AG04449 (cell line): ENCODE measurements at regions of chr12 and their contacts with region 1.

Region 1: GRCh38 chr12:121334513-121335343 is 17.5 kb downstream of the ANAPC5 start:
- DNase-seq: peak; percentile 36
- H3K4me3 ChIP-seq: no peak overlapping the region
- CTCF ChIP-seq: peak; percentile 73

Region 2: GRCh38 chr12:121304306-121304705 is 30.4 kb before region 1 on chr12:
- CTCF ChIA-PET with region 1: interaction called, 22 read pairs
- POLR2A ChIA-PET with region 1: no interaction called
- DNase-seq: no peak
- H3K4me3 ChIP-seq: no peak overlapping the region
- CTCF ChIP-seq: no peak

Region 3: DNA sequence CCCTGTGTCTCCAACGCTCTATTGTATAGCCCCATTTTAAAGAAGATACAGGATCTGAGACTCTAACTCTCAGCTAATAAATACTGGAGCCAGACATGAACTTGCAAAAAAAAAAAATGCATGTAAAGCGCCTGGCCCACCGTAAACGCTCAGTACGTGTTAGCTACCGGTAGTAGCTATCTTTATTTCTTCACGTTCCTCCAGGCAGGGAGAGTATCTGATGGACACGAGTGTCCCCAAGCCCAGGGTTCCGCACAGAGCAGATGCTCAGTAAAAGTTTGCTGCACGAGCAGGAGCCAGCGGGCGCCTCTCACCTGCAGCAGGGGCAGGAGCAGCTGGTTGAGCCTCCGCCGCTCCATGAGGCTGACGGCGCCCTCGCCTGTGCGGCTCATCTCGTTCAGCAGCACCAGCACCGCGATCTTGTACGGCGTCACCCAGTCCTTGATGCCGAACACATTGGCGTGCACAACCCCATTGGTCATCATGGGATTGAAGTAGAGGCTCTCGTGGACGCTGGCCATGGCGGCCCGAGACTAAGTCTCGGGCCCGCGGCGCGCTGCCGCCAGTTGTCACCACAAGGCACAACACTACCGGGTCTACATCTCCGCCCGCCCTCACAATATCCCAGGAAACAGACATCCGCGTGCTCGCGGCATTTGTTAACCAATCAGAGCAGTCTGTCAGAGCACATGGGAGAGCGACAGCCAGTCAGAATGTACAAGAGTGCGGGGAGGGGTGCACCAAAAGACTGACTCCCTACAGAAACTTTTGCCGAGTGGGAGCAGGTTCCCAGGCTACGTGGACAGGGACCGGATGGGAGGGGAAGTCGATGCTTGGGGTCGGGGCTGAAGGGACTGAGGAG is 17.3 kb after region 1 on chr12 and contains the start of gene ANAPC5:
- CTCF ChIA-PET with region 1: interaction called, 117 read pairs
- POLR2A ChIA-PET with region 1: no interaction called
- DNase-seq: peak; percentile 96
- H3K4me3 ChIP-seq: peak within 1 kb of the TSS; percentile 98
- CTCF ChIP-seq: no peak

Region 4: GRCh38 chr12:121404734-121405133 is 70.0 kb after region 1 on chr12:
- CTCF ChIA-PET with region 1: interaction called, 30 read pairs
- POLR2A ChIA-PET with region 1: no interaction called
- DNase-seq: no peak
- H3K4me3 ChIP-seq: no peak overlapping the region
- CTCF ChIP-seq: no peak

Region 5: DNA sequence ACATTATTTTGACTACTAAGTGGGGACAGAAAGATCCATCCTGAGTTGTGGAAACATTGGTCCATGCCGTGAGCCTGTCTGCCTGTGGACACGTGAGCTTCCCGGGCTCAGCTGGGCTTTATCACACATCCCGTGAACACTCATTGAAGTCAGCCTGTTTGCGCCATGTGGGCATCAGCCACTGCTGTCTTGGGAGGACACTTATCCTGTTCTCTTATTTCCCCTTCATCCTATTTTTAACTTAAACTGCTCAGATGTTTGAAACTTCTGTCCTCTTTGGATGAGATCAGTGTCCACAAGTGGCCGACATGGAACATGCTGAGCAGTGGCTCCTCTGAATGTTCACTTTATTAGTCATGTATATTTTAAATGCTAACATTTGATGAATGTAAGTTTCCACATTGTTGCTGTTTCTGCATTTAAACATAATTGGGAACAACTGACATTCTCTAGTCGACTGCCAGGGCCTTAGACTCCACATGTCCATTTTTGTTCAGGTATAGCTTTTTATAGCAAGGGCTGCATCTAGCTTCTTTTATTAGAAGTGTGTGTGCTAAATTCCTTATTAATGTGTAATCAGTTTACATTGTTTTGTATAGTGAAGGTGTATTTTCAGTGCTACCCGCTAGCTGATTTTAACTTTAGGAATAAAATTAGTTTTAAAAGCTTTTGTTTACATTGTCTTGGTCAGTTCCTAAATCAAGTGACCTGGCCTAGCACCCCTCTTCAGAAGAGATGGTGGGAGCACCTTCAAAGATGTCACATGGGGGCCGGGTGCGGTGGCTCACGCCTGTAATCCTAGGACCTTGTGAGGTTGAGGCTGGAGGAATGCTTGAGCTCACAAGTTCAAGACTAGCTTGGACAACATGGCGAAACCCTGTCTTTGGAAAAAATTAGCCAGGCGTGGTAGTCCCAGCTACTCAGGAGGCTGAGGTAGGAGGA is 89.2 kb after region 1 on chr12:
- CTCF ChIA-PET with region 1: interaction called, 51 read pairs
- POLR2A ChIA-PET with region 1: no interaction called
- DNase-seq: no peak
- H3K4me3 ChIP-seq: no peak overlapping the region
- CTCF ChIP-seq: no peak

Region 6: DNA sequence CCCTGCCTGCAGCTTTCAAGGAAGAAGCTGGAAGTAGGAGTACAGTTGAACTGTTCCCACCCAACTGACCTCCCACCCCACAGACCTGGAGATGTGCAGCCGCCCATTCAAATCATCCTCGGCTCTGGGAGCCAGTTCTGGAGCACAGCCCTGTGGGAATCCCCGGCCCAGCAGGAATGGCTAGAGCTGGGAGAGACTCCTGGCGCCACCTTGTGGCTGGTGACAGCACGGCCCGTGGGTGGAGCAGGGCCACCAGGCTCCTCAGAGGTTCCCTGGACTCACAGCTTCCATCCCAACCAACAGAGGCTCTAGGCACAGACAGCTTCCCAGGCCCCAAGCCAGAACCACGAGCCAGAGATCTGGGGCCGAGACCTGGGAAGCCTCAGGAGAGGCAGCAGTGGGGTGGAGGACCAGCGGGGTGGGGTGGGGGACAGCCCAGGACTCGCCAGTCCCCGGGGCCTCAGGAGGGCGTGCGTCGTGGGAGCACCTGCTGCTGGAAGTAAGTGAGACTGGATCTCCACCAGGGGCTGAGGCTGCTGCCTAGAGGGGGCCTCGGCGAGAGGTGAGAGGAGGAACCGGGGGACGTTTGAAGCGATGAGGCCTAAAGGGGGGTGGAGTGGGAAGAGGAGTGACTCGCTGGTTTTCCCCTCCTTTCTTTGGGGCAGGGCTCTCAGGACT is 108.6 kb after region 1 on chr12:
- CTCF ChIA-PET with region 1: interaction called, 371 read pairs
- POLR2A ChIA-PET with region 1: no interaction called
- DNase-seq: no peak
- H3K4me3 ChIP-seq: no peak overlapping the region
- CTCF ChIP-seq: peak; percentile 98